ENCODE measurements at regions of chr2 and their contacts with region 1.

Region 1: GRCh38 chr2:157302492-157303099 is 23.0 kb downstream of the ERMN start:
- DNase-seq: peak in 4 of 5 donors; percentile 56 to 63 (median 60)
- H3K4me3 ChIP-seq: no peak overlapping the region
- H3K4me3 Mint-ChIP-seq: no peak overlapping the region
- H3K27ac ChIP-seq: no peak overlapping the region
- H3K27ac Mint-ChIP-seq: no peak overlapping the region
- H3K4me1 ChIP-seq: no peaks in the 10 kb centered on the region
- H3K4me1 Mint-ChIP-seq: peaks cover 0 to 6% (median 2%) of the 10 kb centered on the region in 4 donors
- H3K27me3 ChIP-seq: no peaks in the 10 kb centered on the region
- H3K27me3 Mint-ChIP-seq: peaks cover 1 to 3% of the 10 kb centered on the region in 2 donors

Region 2: DNA sequence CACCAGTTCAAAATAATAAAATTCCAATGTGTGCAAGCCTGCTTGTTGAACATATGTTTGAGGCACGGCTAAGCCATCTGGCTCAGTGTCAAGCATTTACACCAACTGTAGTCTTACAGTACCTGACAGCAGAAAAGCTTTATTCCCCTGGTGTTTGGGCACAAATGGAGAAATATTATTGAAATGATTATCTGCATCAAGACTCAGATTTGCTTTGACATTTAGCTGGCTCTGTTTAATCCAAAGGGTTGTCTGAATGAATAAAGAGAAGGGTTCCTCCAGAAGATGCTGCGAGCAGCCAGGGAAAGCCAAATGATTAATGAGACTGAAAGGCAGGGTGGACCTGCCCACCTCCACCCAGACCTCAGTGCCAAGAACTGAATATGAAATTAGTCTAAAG is 438.3 kb before region 1 on chr2:
- CTCF ChIA-PET with region 1: no interaction called
- POLR2A ChIA-PET with region 1: no interaction called
- intact Hi-C with region 1: no loop called
- DNase-seq: no peak
- H3K4me3 ChIP-seq: no peak overlapping the region
- H3K4me3 Mint-ChIP-seq: no peak overlapping the region
- H3K27ac ChIP-seq: no peak overlapping the region
- H3K27ac Mint-ChIP-seq: no peak overlapping the region
- H3K4me1 ChIP-seq: no peaks in the 10 kb centered on the region
- H3K4me1 Mint-ChIP-seq: no peaks in the 10 kb centered on the region
- H3K27me3 ChIP-seq: no peaks in the 10 kb centered on the region
- H3K27me3 Mint-ChIP-seq: peaks cover 0 to 4% of the 10 kb centered on the region in 2 donors

Region 3: DNA sequence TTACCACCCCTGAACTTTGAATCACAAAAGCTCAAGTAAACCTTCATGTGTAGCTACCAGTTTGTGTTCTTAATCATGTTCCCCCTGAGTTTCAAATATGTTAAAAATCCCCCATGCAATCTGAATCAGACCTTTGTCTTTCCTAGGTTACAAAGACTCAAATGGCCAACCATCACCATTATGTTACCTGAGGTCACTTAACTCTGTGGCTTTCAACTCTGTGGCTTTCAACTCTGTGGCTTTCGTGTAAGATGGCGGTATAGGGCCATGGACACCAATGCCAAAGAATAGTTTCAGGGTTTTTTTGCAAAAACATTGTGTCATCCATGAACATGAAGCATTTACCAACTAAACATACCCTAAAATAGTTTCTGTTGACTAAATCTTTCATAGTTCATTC is 16.3 kb after region 1 on chr2:
- CTCF ChIA-PET with region 1: interaction called, 136 read pairs
- POLR2A ChIA-PET with region 1: no interaction called
- intact Hi-C with region 1: no loop called
- DNase-seq: no peak
- H3K4me3 ChIP-seq: no peak overlapping the region
- H3K4me3 Mint-ChIP-seq: no peak overlapping the region
- H3K27ac ChIP-seq: no peak overlapping the region
- H3K27ac Mint-ChIP-seq: no peak overlapping the region
- H3K4me1 ChIP-seq: no peaks in the 10 kb centered on the region
- H3K4me1 Mint-ChIP-seq: no peaks in the 10 kb centered on the region
- H3K27me3 ChIP-seq: no peaks in the 10 kb centered on the region
- H3K27me3 Mint-ChIP-seq: no peaks in the 10 kb centered on the region

Region 4: DNA sequence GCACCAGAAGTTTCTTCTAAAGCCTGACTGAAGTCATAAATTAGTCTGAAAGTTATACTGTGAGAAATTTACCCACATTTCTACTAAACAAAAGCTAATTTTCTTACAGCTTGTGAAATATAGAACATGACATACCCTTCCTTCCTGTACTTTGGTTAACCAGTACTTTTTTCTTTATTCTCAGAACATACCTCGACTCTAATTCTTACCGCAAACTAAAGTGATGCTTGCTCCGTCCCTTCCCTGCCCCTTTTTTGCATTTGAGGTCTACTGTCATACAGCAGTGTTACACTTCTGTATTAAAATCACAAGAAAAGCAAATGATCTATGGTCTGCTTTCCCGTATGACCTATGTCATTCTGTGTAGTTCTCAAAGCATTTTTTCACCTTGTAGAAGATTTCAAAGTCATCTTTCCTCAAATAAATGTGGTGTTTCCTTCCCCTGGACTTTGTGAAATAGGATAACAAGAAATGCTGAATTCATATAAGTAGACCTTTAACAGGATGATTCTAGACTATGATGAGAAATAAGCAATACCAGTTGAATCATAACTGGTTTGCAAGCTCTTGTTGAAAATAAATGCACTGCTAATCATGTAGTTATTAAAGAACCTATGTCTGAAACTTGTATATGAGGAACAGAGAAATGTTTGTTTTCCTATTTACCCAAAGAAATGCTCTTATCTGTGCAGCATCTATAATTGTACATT is 110.9 kb after region 1 on chr2:
- CTCF ChIA-PET with region 1: no interaction called
- POLR2A ChIA-PET with region 1: no interaction called
- intact Hi-C with region 1: no loop called
- DNase-seq: peak; percentile 83 to 89 (median 86)
- H3K4me3 ChIP-seq: peak overlapping the region in 1 of 2 donors; percentile 9
- H3K4me3 Mint-ChIP-seq: peak overlapping the region; percentile 24 to 80 (median 71)
- H3K27ac ChIP-seq: peak overlapping the region; percentile 54
- H3K27ac Mint-ChIP-seq: peak overlapping the region; percentile 83 to 98 (median 91)
- H3K4me1 ChIP-seq: peaks cover 97% of the 10 kb centered on the region
- H3K4me1 Mint-ChIP-seq: peaks cover 69 to 91% (median 82%) of the 10 kb centered on the region in 4 donors
- H3K27me3 ChIP-seq: no peaks in the 10 kb centered on the region
- H3K27me3 Mint-ChIP-seq: no peaks in the 10 kb centered on the region

Region 5: DNA sequence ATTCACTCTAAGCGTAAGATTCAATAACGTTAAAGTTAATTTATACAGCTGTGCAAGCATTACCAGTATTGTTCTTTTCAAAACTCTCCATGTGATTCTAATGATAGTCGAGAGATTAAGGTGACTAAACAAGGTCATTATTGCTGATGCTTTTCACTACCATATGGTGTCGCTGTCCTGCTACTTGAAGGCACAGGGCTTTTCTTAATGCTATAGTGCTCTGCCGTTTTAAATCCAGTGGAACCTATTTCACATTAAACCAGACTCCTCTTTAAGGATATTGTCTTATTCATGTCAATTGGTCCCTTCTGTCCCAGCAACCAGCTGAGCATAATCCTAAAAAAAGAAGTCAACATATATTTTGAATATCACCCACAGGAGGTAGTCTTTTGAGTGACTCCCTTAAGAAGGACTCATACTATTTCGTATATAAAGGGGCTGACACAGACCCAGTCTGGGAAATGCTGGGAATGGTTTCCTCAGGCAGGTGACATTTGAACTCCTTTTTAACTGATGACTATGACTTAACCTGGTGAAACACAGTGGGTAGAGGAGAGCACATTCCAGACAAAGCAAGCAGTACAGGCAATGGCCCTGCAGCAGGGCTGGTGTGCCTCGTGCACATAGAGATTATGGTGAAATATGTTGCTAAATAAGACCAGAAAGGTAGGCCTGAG is 195.2 kb after region 1 on chr2:
- CTCF ChIA-PET with region 1: interaction called, 100 read pairs
- POLR2A ChIA-PET with region 1: interaction called, 6 read pairs
- intact Hi-C with region 1: loop called (anchors 1 kb)
- DNase-seq: peak; percentile 35 to 52 (median 40)
- H3K4me3 ChIP-seq: no peak overlapping the region
- H3K4me3 Mint-ChIP-seq: no peak overlapping the region
- H3K27ac ChIP-seq: no peak overlapping the region
- H3K27ac Mint-ChIP-seq: no peak overlapping the region
- H3K4me1 ChIP-seq: peaks cover under 1% of the 10 kb centered on the region
- H3K4me1 Mint-ChIP-seq: peaks cover 6 to 13% (median 11%) of the 10 kb centered on the region in 4 donors
- H3K27me3 ChIP-seq: no peaks in the 10 kb centered on the region
- H3K27me3 Mint-ChIP-seq: peaks cover 0 to 3% of the 10 kb centered on the region in 2 donors

Region 6: DNA sequence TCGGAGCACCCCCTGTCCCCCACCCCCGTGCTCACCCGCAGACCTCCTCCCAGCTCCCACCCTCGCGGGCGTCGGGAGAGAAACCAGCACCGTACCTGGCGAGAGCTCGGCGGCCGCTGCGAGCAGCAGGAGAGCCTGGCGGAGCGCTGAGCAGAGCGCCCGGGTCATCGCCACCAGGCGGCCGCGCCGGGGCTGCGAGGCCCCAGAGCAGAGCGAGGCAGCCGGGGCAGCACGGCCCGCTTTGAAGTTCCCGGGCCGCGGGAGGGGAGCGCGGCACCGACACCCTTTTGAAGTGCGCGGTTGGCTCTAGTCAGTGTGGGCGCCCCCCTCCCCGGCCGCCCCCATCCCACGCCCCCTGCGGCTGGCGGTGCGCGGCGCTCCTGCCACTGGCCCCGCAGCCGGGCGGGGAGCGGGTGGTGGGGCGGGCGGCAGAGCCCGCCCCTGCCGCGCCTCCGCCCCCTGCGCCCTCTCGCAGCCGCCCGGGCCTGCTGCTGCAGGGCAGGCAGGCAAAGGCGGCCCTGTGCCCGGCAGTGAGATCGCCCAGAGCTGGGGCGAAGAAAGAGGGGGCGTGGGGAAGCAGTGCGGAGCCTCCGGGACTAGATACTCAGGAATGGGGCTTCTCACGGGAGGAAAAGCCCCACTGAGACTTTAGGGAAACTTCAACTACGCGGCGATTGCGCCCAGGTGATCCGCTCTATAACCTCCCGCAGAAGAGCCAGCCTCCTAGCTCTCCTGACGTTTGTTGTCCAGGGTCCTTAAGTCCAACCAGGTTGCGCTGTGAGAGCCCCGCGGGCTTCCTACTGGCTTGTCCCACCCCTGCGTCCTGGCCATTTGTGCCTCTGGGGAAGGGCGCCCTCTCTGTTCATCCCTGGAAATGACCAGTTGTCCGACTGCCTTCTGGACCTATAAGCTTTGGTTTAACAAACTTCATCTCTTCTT is 326.1 kb after region 1 on chr2 and contains the start of gene ACVR1C:
- CTCF ChIA-PET with region 1: interaction called, 17 read pairs
- POLR2A ChIA-PET with region 1: no interaction called
- intact Hi-C with region 1: no loop called
- DNase-seq: peak; percentile 70 to 81 (median 75)
- H3K4me3 ChIP-seq: peak within 1 kb of the TSS; percentile 45 to 68
- H3K4me3 Mint-ChIP-seq: peak within 1 kb of the TSS; percentile 92 to 98 (median 95)
- H3K27ac ChIP-seq: peak within 1 kb of the TSS; percentile 58
- H3K27ac Mint-ChIP-seq: peak within 1 kb of the TSS; percentile 85 to 94 (median 89)
- H3K4me1 ChIP-seq: peaks cover 39% of the 10 kb centered on the region
- H3K4me1 Mint-ChIP-seq: peaks cover 22 to 48% (median 33%) of the 10 kb centered on the region in 4 donors
- H3K27me3 ChIP-seq: no peaks in the 10 kb centered on the region
- H3K27me3 Mint-ChIP-seq: peaks cover 0 to 2% of the 10 kb centered on the region in 2 donors
- total RNA-seq, gene ACVR1C: 6.3 to 6.9 TPM

Region 7: GRCh38 chr2:157898591-157898996 is 596.0 kb after region 1 on chr2:
- CTCF ChIA-PET with region 1: interaction called, 4 read pairs
- POLR2A ChIA-PET with region 1: no interaction called
- intact Hi-C with region 1: loop called (anchors 5 kb)
- DNase-seq: peak in 4 of 5 donors; percentile 15 to 83 (median 32)
- H3K4me3 ChIP-seq: peak overlapping the region in 1 of 2 donors; percentile 11
- H3K4me3 Mint-ChIP-seq: peak overlapping the region; percentile 40 to 95 (median 90)
- H3K27ac ChIP-seq: peak overlapping the region; percentile 51
- H3K27ac Mint-ChIP-seq: peak overlapping the region; percentile 96 to 100 (median 99)
- H3K4me1 ChIP-seq: peaks cover 77% of the 10 kb centered on the region
- H3K4me1 Mint-ChIP-seq: peaks cover 62 to 79% (median 72%) of the 10 kb centered on the region in 4 donors
- H3K27me3 ChIP-seq: no peaks in the 10 kb centered on the region
- H3K27me3 Mint-ChIP-seq: no peaks in the 10 kb centered on the region

Region 8: DNA sequence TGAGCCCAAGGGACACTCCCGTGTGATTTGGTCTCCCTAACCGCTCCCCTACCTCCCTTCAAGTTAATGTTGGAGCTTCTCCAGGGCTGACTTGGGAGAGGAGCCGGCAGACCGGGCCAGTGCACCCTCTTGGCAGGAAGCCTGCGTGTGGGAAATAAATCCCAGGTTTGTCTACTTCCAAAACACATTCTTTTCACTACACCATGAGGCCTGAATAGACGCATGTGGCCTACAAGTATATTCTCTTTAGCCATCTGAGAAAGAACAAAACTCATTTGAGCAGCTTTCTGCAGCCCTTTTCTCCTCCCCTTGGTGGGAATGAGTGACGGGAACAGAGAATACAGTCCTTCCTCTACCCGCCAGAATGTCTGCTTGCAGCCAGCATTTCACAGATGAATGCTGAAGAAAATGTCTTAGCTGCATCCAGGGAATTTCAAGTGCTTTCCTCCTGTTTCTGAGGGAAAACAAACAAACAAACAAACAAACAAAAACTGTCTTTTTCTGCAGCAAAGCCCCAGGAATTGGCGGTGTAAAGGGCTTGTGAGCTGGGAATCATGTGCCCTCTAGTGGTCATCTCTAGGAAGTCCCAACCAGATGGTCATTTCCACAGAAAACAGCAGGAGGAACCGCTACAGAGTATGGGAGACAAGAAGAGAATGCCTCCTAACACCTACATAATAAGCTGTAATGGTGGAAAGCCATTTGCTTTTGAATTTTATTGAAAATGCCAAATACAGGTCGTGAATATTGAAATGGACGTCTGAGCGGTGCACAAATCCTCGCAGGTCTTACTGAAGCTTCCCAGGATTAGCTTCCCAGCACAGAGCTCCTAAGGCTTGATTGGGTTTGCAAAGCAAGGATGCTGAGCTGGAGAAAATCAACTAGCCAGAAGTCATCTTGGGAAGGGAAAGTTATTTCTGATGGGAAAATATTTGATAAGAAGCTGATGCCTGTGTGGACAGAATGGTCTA is 1451.3 kb after region 1 on chr2:
- CTCF ChIA-PET with region 1: interaction called, 6 read pairs
- POLR2A ChIA-PET with region 1: no interaction called
- intact Hi-C with region 1: loop called (anchors 2 kb)
- DNase-seq: peak in 4 of 5 donors; percentile 31 to 43 (median 36)
- H3K4me3 ChIP-seq: no peak overlapping the region
- H3K4me3 Mint-ChIP-seq: no peak overlapping the region
- H3K27ac ChIP-seq: no peak overlapping the region
- H3K27ac Mint-ChIP-seq: no peak overlapping the region
- H3K4me1 ChIP-seq: no peaks in the 10 kb centered on the region
- H3K4me1 Mint-ChIP-seq: no peaks in the 10 kb centered on the region
- H3K27me3 ChIP-seq: no peaks in the 10 kb centered on the region
- H3K27me3 Mint-ChIP-seq: peaks cover 16 to 24% of the 10 kb centered on the region in 2 donors